ENCODE measurements at regions of chr21 and their contacts with region 1.

Region 1: DNA sequence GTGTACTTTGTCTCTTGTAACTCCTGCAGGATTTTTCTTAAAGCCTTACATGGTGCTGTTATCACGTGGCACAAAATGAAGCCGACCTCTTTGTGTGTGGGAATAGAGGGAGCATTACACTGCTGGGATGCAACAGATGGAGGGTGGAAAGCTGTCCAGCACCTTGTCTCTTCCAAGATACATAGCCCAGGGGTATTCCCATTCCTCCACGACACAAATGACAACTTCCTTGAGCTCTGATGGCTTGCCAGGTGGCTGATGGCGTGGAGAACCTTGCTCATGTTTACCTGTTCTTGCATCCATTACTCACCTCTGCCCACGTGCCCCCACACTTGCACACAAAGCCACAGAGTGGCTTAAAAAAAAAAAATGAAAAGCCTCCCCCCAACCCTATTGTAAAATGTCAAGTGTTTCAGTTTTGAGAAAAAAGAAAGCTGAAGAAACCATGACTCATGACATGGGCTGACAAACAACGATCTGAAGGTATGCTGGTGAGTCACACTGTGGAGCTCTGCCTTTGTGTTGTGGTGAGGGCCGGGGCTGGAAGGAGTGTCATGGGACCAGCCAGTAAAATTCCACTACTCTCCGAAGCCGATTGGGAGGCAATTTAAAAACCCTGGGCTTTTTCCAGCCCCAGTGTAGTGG is 32.0 kb upstream of the ATP5PO start:
- DNase-seq: peak; percentile 30
- H3K4me3 ChIP-seq: peak overlapping the region; percentile 21
- H3K27ac ChIP-seq: peak overlapping the region; percentile 66
- H3K4me1 ChIP-seq: peaks cover 41% of the 10 kb centered on the region
- CTCF ChIP-seq: no peak; the same call in 1 of the 2 replicates

Region 2: DNA sequence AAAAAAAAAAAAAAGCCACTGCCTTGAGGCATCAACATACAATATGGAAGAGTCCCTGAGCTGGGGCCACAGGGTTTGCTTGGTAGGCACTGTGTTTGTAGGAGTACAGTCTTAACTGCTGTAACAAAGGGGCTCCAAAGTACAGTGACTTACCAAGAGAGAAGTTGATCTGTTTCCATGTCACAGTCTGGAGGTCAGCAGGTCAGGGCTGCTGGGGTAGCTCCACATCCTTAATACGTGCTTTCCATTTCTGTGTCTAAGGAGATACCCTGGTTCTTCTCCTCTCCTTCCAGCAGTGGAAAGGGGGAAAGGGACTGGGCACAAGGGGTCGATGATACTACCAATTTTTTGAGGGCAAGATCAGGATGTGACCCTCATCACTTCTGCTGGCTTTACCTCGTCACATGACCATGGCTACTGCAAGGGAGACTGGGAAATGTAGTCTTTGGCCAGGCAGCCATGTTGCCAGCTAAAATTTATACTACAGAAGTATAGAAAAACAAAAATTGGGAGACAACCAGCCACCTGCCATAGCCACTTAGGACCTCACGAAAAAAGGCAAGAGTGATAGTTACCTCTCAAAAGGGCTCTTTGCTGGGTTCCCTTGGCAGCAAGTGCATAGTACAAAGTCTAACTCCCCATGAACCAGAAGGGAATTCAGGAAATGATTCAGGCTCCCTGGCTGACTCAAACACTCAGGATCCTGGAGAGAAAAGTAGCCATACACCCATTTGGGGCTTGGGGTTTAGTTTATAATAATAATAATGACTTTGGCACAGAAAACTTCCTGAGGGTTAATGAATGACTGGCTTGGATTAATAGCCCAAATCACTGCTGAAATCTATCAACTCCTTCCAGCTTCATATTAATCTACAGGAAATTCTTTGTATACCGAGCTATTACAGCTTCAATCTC is 20.8 kb after region 1 on chr21:
- CTCF ChIA-PET with region 1: no interaction called
- POLR2A ChIA-PET with region 1: interaction called, 11 read pairs
- intact Hi-C with region 1: no loop called
- DNase-seq: peak; percentile 80
- H3K4me3 ChIP-seq: peak overlapping the region; percentile 62
- H3K27ac ChIP-seq: peak overlapping the region; percentile 2
- H3K4me1 ChIP-seq: peaks cover 11% of the 10 kb centered on the region
- CTCF ChIP-seq: no peak

Measured in OCI-LY7 (cell line).